Lower lobe of right lung (tissue), 2 donors: ENCODE measurements at regions of chr3 and their contacts with region 1.

Region 1: DNA sequence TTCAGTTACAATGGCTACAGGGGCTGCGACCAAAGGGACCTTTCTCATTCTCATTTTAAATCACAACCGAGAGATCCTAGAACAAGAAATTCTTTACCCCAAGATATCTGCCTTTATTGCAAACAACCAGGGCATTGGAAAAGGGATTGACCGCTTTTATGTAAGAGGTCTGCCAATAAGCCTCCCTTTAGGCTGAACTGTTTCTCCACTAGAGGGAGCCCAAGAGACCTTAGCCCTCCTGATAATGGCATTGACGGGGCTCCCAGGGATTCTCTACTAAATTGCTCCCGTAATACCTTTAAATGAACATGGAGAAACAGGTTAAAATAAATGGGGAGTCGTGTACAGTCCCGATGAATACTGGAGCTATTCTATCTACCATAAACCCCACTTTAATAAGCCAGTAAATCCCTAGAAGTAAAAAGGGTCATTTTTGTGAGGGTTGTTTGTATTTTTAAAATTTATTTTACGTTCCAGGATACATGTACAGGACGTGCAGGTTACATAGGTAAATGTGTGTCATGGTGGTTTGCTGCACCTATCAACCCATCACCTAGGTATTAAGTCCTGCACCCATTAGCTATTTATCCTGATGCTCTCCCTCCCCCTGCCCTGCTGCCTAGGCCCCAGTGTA is 7.5 kb upstream of the IGSF10 start:
- DNase-seq: no peak
- ATAC-seq: peak; percentile 83 to 87
- H3K4me3 ChIP-seq: no peak overlapping the region
- H3K27ac ChIP-seq: no peak overlapping the region
- H3K4me1 ChIP-seq: no peaks in the 10 kb centered on the region
- H3K27me3 ChIP-seq: no peaks in the 10 kb centered on the region
- CTCF ChIP-seq: peak; percentile 85

Region 2: DNA sequence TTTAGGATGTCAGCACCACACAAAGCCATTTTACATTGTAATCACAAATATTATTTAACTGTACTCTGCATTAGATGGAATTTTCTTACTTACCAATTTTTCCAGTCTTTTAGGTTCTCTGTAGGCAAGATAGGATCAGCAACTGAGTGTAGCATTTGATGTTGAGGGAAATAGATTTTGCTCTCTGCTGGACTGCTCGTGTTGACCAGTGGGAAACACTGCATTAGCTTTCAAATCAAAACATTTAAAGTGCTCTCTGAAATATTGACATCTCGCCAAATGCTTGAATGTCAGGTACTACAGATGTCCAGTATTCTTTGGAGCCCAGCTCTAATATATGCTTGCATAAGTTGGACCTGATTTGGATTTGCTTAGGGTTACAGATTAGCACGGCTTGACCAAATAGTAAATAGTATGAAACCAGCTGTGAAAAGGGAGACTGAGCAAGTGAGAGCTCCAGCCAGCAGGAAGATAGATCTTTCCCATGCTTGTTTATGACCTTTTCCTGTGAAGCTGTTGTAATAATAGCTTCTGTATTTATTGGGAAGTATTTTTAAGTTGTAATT is 219.5 kb before region 1 on chr3:
- intact Hi-C with region 1: no loop called
- DNase-seq: no peak
- ATAC-seq: peak in 1 of 2 donors; percentile 18
- H3K4me3 ChIP-seq: peak overlapping the region; percentile 4
- H3K27ac ChIP-seq: no peak overlapping the region
- H3K4me1 ChIP-seq: no peaks in the 10 kb centered on the region
- H3K27me3 ChIP-seq: no peaks in the 10 kb centered on the region
- CTCF ChIP-seq: no peak

Region 3: DNA sequence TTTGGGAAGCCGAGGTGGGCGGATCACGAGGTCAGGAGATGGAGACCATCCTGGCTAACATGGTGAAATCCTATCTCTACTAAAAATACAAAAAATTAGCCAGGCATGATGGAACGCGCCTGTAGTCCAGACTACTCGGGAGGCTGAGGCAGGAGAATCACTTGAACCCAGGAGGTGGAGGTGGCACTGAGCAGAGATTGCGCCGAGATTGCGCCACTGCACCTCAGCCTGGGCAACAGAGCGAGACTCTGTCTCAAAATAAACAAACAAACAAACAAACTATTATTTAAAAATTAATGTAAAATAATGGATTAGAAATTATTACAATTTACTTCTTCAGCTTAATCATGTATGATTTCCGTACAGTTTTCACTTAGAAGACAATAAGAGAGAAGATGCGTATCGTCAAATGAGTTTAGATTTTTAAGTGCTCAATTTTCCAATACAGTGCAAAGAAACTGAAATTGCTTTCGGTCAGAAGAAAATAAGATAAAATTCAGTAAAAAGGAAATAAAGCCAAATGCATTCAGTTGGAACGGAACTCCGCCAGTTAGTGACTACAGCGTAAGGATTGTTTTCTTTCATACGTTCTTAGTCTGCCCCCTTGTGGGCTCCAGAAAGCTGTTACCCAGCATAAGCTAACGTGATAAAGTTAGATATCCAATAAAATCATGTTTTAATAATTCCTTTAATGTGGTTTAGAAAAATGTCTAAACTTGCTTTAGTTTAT is 370.3 kb after region 1 on chr3:
- intact Hi-C with region 1: loop called (anchors 10 kb)
- DNase-seq: no peak
- ATAC-seq: peak; percentile 85 to 90
- H3K4me3 ChIP-seq: peak overlapping the region; percentile 19
- H3K27ac ChIP-seq: no peak overlapping the region
- H3K4me1 ChIP-seq: peaks cover 16% of the 10 kb centered on the region
- H3K27me3 ChIP-seq: no peaks in the 10 kb centered on the region
- CTCF ChIP-seq: peak; percentile 84